MCF 10A (cell line): ENCODE measurements at regions of chr7 and their contacts with region 1.

Region 1: GRCh38 chr7:137592232-137592896 is 248.8 kb upstream of the PTN start:
- DNase-seq: peak; percentile 70
- H3K4me3 Mint-ChIP-seq: no peak overlapping the region
- H3K27ac Mint-ChIP-seq: no peak overlapping the region
- H3K4me1 Mint-ChIP-seq: no peaks in the 10 kb centered on the region
- H3K27me3 Mint-ChIP-seq: peaks cover 14% of the 10 kb centered on the region
- CTCF ChIP-seq: peak; percentile 91

Region 2: GRCh38 chr7:135672560-135673359 is 1919.6 kb before region 1 on chr7:
- CTCF ChIA-PET with region 1: interaction called, 3 read pairs
- POLR2A ChIA-PET with region 1: no interaction called
- intact Hi-C with region 1: loop called (anchors 10 kb)
- DNase-seq: peak; percentile 77
- H3K4me3 Mint-ChIP-seq: no peak overlapping the region
- H3K27ac Mint-ChIP-seq: peak overlapping the region; percentile 46
- H3K4me1 Mint-ChIP-seq: peaks cover 37% of the 10 kb centered on the region
- H3K27me3 Mint-ChIP-seq: no peaks in the 10 kb centered on the region
- CTCF ChIP-seq: peak; percentile 67

Region 3: GRCh38 chr7:136874238-136875032 is 717.9 kb before region 1 on chr7:
- CTCF ChIA-PET with region 1: interaction called, 3 read pairs
- POLR2A ChIA-PET with region 1: no interaction called
- intact Hi-C with region 1: loop called (anchors 2 kb)
- DNase-seq: peak; percentile 34
- H3K4me3 Mint-ChIP-seq: no peak overlapping the region
- H3K27ac Mint-ChIP-seq: no peak overlapping the region
- H3K4me1 Mint-ChIP-seq: no peaks in the 10 kb centered on the region
- H3K27me3 Mint-ChIP-seq: peaks cover 23% of the 10 kb centered on the region
- CTCF ChIP-seq: peak; percentile 30

Region 4: DNA sequence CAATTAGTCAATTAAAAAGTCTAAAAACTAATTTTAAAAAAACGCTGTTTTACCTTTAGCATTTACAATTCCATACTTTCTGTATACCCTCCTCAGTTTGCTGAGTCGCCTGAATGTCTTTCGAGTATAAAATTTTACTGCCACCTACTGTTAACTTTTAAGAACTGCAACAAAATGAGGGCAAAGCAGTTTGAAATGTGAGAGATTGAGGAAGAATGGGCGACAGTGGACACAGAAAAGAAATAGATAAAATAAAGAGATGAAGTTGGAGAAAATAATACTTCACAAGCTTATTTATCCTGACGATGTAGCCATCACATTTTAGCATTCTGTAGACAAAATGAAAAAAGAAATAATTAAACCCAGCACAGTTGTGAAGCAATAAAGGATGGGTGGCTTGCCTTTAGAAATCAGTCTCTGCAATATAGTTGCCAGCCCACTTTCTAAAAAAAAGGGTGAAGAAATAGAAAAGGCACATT is 138.1 kb before region 1 on chr7:
- CTCF ChIA-PET with region 1: interaction called, 6 read pairs
- POLR2A ChIA-PET with region 1: no interaction called
- intact Hi-C with region 1: loop called (anchors 1 kb)
- DNase-seq: peak; percentile 57
- H3K4me3 Mint-ChIP-seq: no peak overlapping the region
- H3K27ac Mint-ChIP-seq: no peak overlapping the region
- H3K4me1 Mint-ChIP-seq: no peaks in the 10 kb centered on the region
- H3K27me3 Mint-ChIP-seq: peaks cover 64% of the 10 kb centered on the region
- CTCF ChIP-seq: peak; percentile 48

Region 5: DNA sequence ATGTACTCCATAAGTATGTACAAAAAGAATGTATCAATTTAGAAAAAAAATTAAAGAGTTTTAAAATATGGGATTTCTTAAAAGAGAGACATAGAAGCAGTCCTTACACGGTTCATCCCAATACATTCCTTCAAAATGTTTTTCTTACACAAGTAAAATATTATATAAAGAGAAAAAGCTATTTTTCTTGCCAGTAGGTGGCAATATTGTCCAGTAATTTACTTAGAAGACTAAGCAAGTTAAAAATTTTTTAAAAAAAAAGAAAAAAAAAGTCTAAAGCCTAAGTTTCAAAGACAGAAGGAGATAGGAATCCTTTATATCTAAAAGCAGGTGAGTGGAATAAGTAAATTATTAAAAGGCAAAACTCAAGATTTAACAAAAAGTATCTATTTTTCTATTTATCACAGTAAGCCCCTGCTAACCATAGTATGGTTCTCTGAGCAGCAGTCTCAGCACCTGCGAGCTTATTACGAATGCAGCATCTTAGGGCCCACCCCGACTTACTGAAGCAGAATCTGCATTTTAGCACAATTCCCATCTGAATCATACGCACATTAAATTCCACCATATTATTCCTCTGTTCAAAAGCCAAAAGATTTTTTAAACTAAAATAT is 13.8 kb after region 1 on chr7:
- CTCF ChIA-PET with region 1: interaction called, 38 read pairs
- POLR2A ChIA-PET with region 1: no interaction called
- intact Hi-C with region 1: no loop called
- DNase-seq: peak; percentile 47
- H3K4me3 Mint-ChIP-seq: no peak overlapping the region
- H3K27ac Mint-ChIP-seq: no peak overlapping the region
- H3K4me1 Mint-ChIP-seq: no peaks in the 10 kb centered on the region
- H3K27me3 Mint-ChIP-seq: peaks cover 46% of the 10 kb centered on the region
- CTCF ChIP-seq: peak; percentile 35